Heart left ventricle (tissue), 16 donors: ENCODE measurements at regions of chr19 and their contacts with region 1.

Region 1: DNA sequence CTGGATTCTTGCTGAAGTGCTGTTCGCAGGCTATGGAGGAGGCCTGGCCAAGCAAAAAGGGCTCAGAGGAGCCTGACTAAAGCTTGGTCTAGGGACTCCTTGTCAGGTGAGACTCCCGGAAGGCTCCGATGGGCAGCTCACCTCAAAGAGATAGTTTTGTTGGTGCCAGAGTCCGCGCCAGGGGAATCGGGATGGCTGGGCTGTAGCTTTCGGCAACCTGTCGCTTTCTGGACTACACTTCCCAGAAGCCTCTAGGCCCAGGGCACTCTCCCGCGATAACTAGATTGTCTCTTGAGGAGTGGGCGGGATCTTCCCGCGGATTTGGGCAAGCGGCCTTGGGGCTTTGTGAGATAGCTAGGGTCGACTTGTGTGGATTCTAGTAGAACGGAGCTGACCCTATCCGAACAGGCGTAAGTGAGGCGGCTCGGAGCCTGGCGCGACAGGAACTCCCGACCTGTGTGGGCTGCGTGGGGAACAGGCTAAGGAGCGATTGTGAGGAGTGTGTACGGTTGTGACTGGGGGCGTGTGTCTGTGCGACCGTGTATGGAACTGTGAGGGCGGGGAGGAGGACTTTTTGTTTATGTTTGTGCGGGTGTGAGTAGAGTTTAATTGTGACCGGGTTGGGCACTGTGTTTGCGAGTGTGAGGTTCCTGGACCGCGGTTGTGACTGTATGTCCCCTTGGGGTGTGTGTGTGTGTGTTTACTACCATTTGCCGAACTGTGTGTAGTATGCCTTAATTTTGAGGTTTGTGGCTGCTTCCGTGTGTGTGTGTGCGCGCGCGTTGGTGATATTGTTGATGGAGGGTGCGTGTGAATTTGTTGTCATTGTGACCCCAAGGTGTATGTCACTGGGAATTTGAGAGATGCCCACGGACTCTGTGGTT is at the start of gene ZNF345:
- DNase-seq: peak; percentile 92 to 95 (median 93)
- ATAC-seq: peak; percentile 96 to 97 (median 96)
- H3K4me3 ChIP-seq: peak within 1 kb of the TSS; percentile 47 to 91 (median 76)
- H3K27ac ChIP-seq: peak within 1 kb of the TSS; percentile 60 to 96 (median 90)
- H3K4me1 ChIP-seq: peaks cover 0 to 31% (median 17%) of the 10 kb centered on the region in 12 donors
- H3K27me3 ChIP-seq: no peaks in the 10 kb centered on the region
- CTCF ChIP-seq: no peak
- POLR2A ChIP-seq: peak in 1 of 2 donors; percentile 47
- total RNA-seq, gene ZNF345: 0.64 to 5.9 (median 4.3) TPM

Region 2: GRCh38 chr19:36528194-36528920 is 322.4 kb before region 1 on chr19 and contains the start of gene ZNF260:
- intact Hi-C with region 1: loop called in 1 of 10 experiments (anchors 5 kb)
- DNase-seq: peak; percentile 97 to 99 (median 98)
- ATAC-seq: peak; percentile 99
- H3K4me3 ChIP-seq: peak within 1 kb of the TSS; percentile 40 to 89 (median 74)
- H3K27ac ChIP-seq: peak within 1 kb of the TSS; percentile 73 to 99 (median 94)
- H3K4me1 ChIP-seq: peaks cover 0 to 26% (median 15%) of the 10 kb centered on the region in 12 donors
- H3K27me3 ChIP-seq: no peaks in the 10 kb centered on the region
- CTCF ChIP-seq: peak in 3 of 12 donors; percentile 10 to 19 (median 16)
- POLR2A ChIP-seq: peak in 1 of 2 donors; percentile 48
- total RNA-seq, gene ZNF260: 5.2 to 13.7 (median 8.5) TPM

Region 3: DNA sequence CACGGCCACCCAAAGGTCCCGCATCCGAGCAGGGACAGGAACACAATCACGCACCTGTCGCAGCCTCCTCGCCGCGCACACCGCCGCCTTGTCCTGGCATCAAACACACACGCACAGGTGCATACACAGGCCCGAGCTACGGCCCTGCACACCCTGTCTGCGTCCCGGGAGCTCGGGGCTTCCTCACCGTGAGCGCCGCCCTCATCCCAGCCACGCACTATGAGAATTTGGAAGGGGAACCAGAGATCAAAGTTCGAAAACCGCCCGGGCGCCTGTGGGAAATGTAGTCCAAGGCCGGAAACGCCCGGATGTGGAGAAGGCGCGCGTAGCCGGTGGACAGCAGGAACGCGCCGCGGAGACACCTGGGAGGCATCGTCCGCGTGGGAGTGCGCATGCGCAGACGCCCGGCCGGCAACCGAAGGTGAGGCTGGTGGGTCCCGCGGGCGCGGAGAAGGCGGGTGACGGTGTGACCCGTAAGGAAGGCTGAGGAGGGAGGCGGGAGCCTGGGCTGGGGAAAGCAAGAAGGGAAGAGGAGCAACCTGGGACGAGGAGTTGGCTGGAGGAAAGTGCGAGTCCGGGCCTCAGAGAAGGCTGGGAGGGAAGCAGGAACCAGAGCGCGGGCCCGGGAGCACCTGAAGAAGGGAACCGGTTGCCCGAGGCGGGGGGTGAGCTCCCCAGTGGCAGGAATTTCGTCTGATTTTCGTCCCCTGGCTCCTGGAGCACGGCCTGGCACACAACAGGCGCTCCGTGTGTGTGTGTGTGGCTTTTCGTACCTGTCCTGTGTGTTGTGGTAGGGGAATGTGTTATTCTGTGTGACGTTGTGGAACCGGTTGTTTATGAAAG is 163.4 kb before region 1 on chr19 and contains the start of gene ZNF567:
- intact Hi-C with region 1: loop called in 1 of 10 experiments (anchors 10 kb)
- DNase-seq: peak; percentile 98 to 99 (median 98)
- ATAC-seq: peak; percentile 99 to 100 (median 99)
- H3K4me3 ChIP-seq: peak within 1 kb of the TSS; percentile 59 to 91 (median 80)
- H3K27ac ChIP-seq: peak within 1 kb of the TSS in 11 of 12 donors; percentile 53 to 82 (median 73)
- H3K4me1 ChIP-seq: peaks cover 0 to 20% (median 14%) of the 10 kb centered on the region in 12 donors
- H3K27me3 ChIP-seq: no peaks in the 10 kb centered on the region
- CTCF ChIP-seq: no peak
- POLR2A ChIP-seq: peak in 1 of 2 donors; percentile 89
- total RNA-seq, gene ZNF567: 2.9 to 5.8 (median 3.9) TPM

Region 4: GRCh38 chr19:36796076-36796992 is 54.5 kb before region 1 on chr19:
- intact Hi-C with region 1: loop called in 2 of 10 experiments (anchors 2 to 10 kb)
- DNase-seq: no peak
- ATAC-seq: no peak
- H3K4me3 ChIP-seq: peak overlapping the region; percentile 48 to 96 (median 77)
- H3K27ac ChIP-seq: peak overlapping the region; percentile 20 to 87 (median 77)
- H3K4me1 ChIP-seq: peaks cover 0 to 16% (median 8%) of the 10 kb centered on the region in 12 donors
- H3K27me3 ChIP-seq: no peaks in the 10 kb centered on the region
- CTCF ChIP-seq: no peak
- POLR2A ChIP-seq: no peak

Region 5: GRCh38 chr19:36915992-36916830 is 65.4 kb after region 1 on chr19 and contains the starts of genes ZNF568 and ZNF829:
- intact Hi-C with region 1: loop called in 2 of 10 experiments (anchors 1 to 10 kb)
- DNase-seq: peak; percentile 91 to 95 (median 93)
- ATAC-seq: peak; percentile 94 to 99 (median 98)
- H3K4me3 ChIP-seq: peak within 1 kb of the TSS; percentile 60 to 87 (median 80)
- H3K27ac ChIP-seq: peak within 1 kb of the TSS; percentile 80 to 98 (median 97)
- H3K4me1 ChIP-seq: peaks cover 0 to 18% (median 11%) of the 10 kb centered on the region in 12 donors
- H3K27me3 ChIP-seq: no peaks in the 10 kb centered on the region
- CTCF ChIP-seq: peak; percentile 44 to 85 (median 61)
- POLR2A ChIP-seq: no peak
- total RNA-seq, gene ZNF568: 6.6 to 12.1 (median 9.4) TPM
- total RNA-seq, gene ZNF829: 1.3 to 3.5 (median 2.5) TPM